ENCODE measurements at regions of chr2 and their contacts with region 1.

Region 1: GRCh38 chr2:234451852-234452625 is 44.8 kb downstream of the ARL4C start:
- DNase-seq: no peak
- H3K4me3 Mint-ChIP-seq: peak overlapping the region; percentile 72
- H3K27ac Mint-ChIP-seq: peak overlapping the region; percentile 81
- H3K4me1 Mint-ChIP-seq: peaks cover 83% of the 10 kb centered on the region
- H3K27me3 Mint-ChIP-seq: no peaks in the 10 kb centered on the region

Region 2: GRCh38 chr2:234341306-234341985 is 110.6 kb before region 1 on chr2:
- CTCF ChIA-PET with region 1: no interaction called
- POLR2A ChIA-PET with region 1: no interaction called
- DNase-seq: no peak
- H3K4me3 Mint-ChIP-seq: no peak overlapping the region
- H3K27ac Mint-ChIP-seq: no peak overlapping the region
- H3K4me1 Mint-ChIP-seq: peaks cover 16% of the 10 kb centered on the region
- H3K27me3 Mint-ChIP-seq: no peaks in the 10 kb centered on the region

Region 3: GRCh38 chr2:234368861-234369261 is 83.2 kb before region 1 on chr2:
- CTCF ChIA-PET with region 1: interaction called, 5 read pairs
- POLR2A ChIA-PET with region 1: interaction called, 11 read pairs
- DNase-seq: peak; percentile 69
- H3K4me3 Mint-ChIP-seq: no peak overlapping the region
- H3K27ac Mint-ChIP-seq: peak overlapping the region; percentile 85
- H3K4me1 Mint-ChIP-seq: peaks cover 77% of the 10 kb centered on the region
- H3K27me3 Mint-ChIP-seq: no peaks in the 10 kb centered on the region

Region 4: DNA sequence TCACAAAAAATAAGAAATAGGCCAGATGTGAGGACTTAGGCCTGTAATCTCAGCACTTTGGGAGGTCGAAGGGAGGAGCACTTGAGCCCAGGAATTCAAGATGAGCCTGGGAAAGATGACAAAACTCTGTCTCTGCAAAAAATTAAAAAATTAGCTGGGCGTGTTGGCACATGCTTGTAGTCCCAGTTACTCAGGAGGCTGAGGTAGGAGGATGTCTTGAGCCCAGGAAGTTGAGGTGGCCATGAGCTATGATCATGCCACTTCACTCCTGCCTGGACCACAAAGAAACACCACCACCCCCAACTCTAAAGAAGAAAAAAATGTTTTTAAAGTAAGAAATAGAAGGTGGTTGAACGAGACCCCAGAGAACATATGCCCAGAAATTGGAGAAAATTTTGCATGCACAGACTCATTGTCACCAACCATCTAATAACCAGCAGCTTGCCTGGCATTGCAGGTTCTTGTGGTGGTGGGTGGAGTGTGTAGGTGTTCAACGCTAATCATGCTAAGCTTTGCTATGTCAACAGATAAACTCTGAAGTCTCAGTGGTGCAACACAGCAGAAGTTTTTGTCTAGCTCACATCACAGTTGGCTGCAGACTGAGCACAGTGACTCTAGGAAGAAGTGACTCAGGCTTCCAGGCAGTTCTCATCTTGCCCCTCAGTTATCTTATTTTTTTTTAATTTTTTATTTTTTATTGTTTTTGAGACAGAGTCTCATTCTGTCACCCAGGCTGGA is 26.3 kb after region 1 on chr2:
- CTCF ChIA-PET with region 1: interaction called, 26 read pairs
- POLR2A ChIA-PET with region 1: interaction called, 48 read pairs
- DNase-seq: no peak
- H3K4me3 Mint-ChIP-seq: no peak overlapping the region
- H3K27ac Mint-ChIP-seq: peak overlapping the region; percentile 80
- H3K4me1 Mint-ChIP-seq: peaks cover 74% of the 10 kb centered on the region
- H3K27me3 Mint-ChIP-seq: no peaks in the 10 kb centered on the region

Region 5: GRCh38 chr2:234483568-234484251 is 31.7 kb after region 1 on chr2:
- CTCF ChIA-PET with region 1: interaction called, 26 read pairs
- POLR2A ChIA-PET with region 1: interaction called, 143 read pairs
- DNase-seq: peak; percentile 90
- H3K4me3 Mint-ChIP-seq: peak overlapping the region; percentile 59
- H3K27ac Mint-ChIP-seq: peak overlapping the region; percentile 88
- H3K4me1 Mint-ChIP-seq: peaks cover 93% of the 10 kb centered on the region
- H3K27me3 Mint-ChIP-seq: no peaks in the 10 kb centered on the region

Region 6: DNA sequence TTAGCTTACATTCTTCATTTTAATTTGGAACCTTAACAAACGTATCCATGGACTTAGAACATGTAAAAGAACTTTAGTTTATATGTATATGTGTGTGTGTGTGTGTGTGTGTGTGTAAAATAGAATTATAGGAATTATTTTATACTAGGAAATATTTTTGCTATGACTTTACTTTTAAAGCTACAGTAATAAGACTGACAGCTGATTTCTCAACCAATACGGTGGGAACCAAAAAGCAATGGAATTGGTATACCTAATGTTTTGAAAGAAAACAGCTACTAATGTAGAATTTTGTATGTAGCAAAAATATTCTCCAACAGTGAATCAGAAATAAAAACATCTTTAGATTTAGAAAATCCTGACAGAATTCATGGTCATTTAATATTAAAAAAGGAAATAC is 191.4 kb after region 1 on chr2:
- CTCF ChIA-PET with region 1: no interaction called
- POLR2A ChIA-PET with region 1: no interaction called
- DNase-seq: no peak
- H3K4me3 Mint-ChIP-seq: no peak overlapping the region
- H3K27ac Mint-ChIP-seq: no peak overlapping the region
- H3K4me1 Mint-ChIP-seq: no peaks in the 10 kb centered on the region
- H3K27me3 Mint-ChIP-seq: peaks cover 1% of the 10 kb centered on the region

Measured in activated CD4-positive, alpha-beta memory T cell treated with anti-CD3 and anti-CD28 coated beads, Interleukin-2, amount 10 ng/mL, durations not matched to agents 7 days and 5 days (primary cell).